Psoas muscle (tissue), 8 donors: ENCODE measurements at regions of chr22 and their contacts with region 1.

Region 1: DNA sequence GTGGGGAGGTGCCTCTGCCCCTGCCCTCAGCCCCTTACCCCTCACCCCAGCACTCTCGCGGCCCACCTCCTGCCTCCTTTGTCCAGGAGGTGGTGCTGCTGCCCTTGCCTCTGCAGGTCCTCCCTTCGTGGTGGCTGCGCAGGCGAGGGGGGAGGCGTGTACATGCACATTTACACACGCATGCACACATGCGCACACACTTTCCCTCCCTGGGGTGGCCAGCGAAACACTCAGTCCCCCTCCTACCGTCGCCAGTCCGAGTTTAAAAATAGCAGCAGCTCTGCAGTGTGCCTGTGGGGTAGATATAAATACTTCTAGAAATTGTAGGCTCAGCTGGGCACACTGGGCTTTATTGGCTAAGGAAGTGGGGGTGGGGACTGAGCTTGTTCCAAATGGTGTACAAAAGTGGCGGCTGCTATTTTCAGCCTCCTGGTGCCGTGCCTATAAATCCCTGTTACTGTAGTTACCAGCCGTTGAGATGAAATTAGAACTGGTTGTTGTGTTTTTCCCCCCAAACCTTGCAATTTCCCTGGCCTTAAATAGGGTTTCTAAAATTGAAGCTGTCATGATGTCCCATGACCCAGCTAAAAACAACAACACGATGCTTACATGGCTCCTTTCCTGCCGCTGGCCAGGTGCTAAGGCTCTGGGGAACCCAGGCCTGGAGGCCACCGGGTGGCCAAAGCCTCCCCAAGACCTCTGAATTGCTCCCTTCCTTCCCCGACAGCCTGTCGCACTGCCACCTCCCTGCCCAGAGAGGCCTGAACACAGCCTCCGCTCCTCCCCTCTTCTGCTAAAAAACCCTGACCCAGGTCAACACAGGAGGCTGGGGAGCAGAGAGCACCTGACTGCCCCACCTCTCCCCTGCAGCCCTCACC is 12.4 kb downstream of the PICK1 start:
- DNase-seq: peak; percentile 80 to 96
- ATAC-seq: peak; percentile 82 to 88 (median 86)
- H3K4me3 ChIP-seq: peak overlapping the region; percentile 63
- H3K27ac ChIP-seq: peak overlapping the region; percentile 95
- H3K4me1 ChIP-seq: peaks cover 55% of the 10 kb centered on the region
- H3K27me3 ChIP-seq: no peaks in the 10 kb centered on the region
- CTCF ChIP-seq: peak; percentile 59

Region 2: DNA sequence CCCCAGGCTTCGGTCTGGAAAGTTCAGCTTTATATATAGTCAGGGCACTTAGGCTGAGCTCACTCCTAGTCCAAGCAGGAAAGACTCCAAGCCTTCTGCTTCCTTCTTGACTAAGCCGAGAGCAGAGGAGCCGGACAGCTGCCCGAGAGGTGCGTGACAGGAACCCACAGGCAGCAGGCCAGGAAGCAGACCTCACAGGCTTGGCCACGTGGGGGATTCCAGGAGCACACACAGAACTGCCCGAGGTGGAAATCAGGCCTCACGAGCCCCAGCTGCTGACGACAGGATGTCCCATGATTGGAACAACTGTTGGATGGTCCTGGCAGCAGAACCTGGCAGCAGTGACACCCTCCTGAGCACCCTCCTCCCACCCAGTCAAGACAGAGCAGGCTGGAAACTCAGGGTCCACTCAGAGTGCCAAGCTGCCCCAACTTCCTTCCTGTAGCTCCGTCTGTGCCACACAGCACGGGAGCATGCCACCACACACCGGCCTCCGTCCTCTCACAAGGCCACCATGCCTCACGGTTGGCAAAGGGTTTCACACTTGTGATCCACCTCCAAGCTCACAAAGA is 106.6 kb after region 1 on chr22:
- intact Hi-C with region 1: loop called in 1 of 2 experiments (anchors 5 kb)
- DNase-seq: peak; percentile 90 to 97
- ATAC-seq: peak; percentile 75 to 82 (median 76)
- H3K4me3 ChIP-seq: no peak overlapping the region
- H3K27ac ChIP-seq: peak overlapping the region; percentile 99
- H3K4me1 ChIP-seq: peaks cover 80% of the 10 kb centered on the region
- H3K27me3 ChIP-seq: no peaks in the 10 kb centered on the region
- CTCF ChIP-seq: no peak